ENCODE measurements at regions of chr6 and their contacts with region 1.

Region 1: DNA sequence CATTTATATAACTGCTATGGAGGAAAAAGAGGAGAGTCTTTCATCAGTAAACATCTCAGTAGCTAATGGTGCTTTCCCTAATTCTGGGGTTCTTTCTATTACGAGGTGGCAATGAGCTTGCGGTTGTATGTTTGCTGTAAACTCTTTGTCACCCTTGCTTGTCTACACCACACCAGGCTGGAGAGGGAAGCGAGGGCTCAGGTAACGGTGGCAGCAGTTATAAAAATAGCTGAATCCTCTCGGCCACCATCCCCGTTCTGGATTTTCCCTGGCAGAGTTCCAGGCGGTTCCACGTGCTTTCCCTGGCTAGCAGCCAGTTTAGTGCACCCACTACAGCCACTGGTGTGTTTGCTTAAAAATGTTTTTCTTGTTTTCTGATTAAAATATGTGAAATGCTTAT is 39.0 kb downstream of the MAS1 start:
- DNase-seq: peak; percentile 66
- ATAC-seq: peak; percentile 24
- H3K4me3 Mint-ChIP-seq: no peak overlapping the region
- H3K27ac Mint-ChIP-seq: peak overlapping the region; percentile 88
- H3K4me1 Mint-ChIP-seq: peaks cover 34% of the 10 kb centered on the region
- H3K27me3 Mint-ChIP-seq: peaks cover 4% of the 10 kb centered on the region

Region 2: GRCh38 chr6:159726918-159727716 is 202.7 kb before region 1 on chr6 and contains the start of gene WTAP:
- CTCF ChIA-PET with region 1: no interaction called
- POLR2A ChIA-PET with region 1: no interaction called
- intact Hi-C with region 1: loop called in 1 of 2 experiments (anchors 1 kb)
- DNase-seq: peak; percentile 99
- ATAC-seq: peak; percentile 91
- H3K4me3 Mint-ChIP-seq: peak within 1 kb of the TSS; percentile 95
- H3K27ac Mint-ChIP-seq: peak within 1 kb of the TSS; percentile 98
- H3K4me1 Mint-ChIP-seq: peaks cover 47% of the 10 kb centered on the region
- H3K27me3 Mint-ChIP-seq: no peaks in the 10 kb centered on the region
- total RNA-seq, gene WTAP: 87.2 to 91.5 TPM

Region 3: DNA sequence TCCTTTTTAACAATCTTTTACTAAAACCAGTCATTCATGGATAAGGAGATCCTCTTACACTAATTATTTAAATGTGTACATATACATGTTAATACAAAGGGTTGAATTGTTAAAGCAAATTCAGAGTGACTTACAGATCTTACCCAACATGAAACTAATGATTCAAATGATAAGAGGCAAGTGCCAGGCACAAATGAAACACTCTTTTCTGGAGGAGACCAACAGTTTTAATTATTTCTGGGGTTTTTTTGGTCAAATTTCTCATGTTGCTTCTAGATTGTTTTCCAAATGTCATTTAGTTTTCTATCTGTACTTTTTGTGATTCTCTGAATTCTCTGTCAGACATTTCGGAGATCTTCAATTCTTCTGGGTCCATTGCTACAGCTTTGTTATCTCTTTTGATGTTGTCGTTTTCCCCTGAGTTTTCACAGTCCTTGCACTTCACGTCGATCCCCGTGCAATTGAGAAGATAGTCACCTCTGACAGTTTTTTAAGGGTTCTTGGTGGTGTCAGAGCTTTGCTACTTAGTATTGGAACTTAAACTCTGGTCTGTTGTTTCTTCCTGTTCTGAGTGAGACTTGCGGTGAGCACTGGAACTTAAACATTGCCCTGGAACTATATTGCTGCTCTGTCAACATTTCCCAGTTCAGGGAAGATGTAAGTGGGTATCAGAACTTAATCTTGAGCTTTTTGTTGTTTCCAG is 15.8 kb before region 1 on chr6:
- CTCF ChIA-PET with region 1: interaction called, 3 read pairs
- POLR2A ChIA-PET with region 1: interaction called, 8 read pairs
- intact Hi-C with region 1: loop called in 1 of 2 experiments (anchors 1 kb)
- DNase-seq: no peak
- ATAC-seq: peak; percentile 61
- H3K4me3 Mint-ChIP-seq: peak overlapping the region; percentile 1
- H3K27ac Mint-ChIP-seq: peak overlapping the region; percentile 41
- H3K4me1 Mint-ChIP-seq: peaks cover 7% of the 10 kb centered on the region
- H3K27me3 Mint-ChIP-seq: peaks cover 29% of the 10 kb centered on the region

Region 4: GRCh38 chr6:160462551-160463109 is 532.8 kb after region 1 on chr6:
- CTCF ChIA-PET with region 1: no interaction called
- POLR2A ChIA-PET with region 1: no interaction called
- intact Hi-C with region 1: loop called (anchors 1 to 2 kb)
- DNase-seq: peak; percentile 63
- ATAC-seq: peak; percentile 80
- H3K4me3 Mint-ChIP-seq: peak overlapping the region; percentile 17
- H3K27ac Mint-ChIP-seq: peak overlapping the region; percentile 65
- H3K4me1 Mint-ChIP-seq: peaks cover 60% of the 10 kb centered on the region
- H3K27me3 Mint-ChIP-seq: peaks cover 34% of the 10 kb centered on the region

Measured in activated CD4-positive, alpha-beta T cell treated with anti-CD3 and anti-CD28 coated beads for 36 hours (primary cell).